ENCODE measurements at regions of chr15 and their contacts with region 1.

Region 1: GRCh38 chr15:74615508-74616365 is at the start of gene CLK3:
- DNase-seq: peak; percentile 96
- ATAC-seq: peak; percentile 80
- H3K4me3 ChIP-seq: peak within 1 kb of the TSS; percentile 50 to 100 (median 100)
- H3K4me3 Mint-ChIP-seq: peak within 1 kb of the TSS; percentile 92
- H3K27ac ChIP-seq: peak within 1 kb of the TSS; percentile 99
- H3K27ac Mint-ChIP-seq: peak within 1 kb of the TSS; percentile 97
- H3K4me1 ChIP-seq: peaks cover 18 to 39% of the 10 kb centered on the region in 2 donors
- H3K4me1 Mint-ChIP-seq: peaks cover 37% of the 10 kb centered on the region
- H3K27me3 ChIP-seq: no peaks in the 10 kb centered on the region
- H3K27me3 Mint-ChIP-seq: no peaks in the 10 kb centered on the region
- CTCF ChIP-seq: no peak
- total RNA-seq, gene CLK3: 164 and 176 TPM in 2 replicates

Region 2: GRCh38 chr15:74460871-74461846 is 154.6 kb before region 1 on chr15 and contains the start of gene UBL7:
- CTCF ChIA-PET with region 1: interaction called, 3 read pairs
- POLR2A ChIA-PET with region 1: interaction called, 3 read pairs
- intact Hi-C with region 1: loop called (anchors 1 kb)
- DNase-seq: peak; percentile 96
- ATAC-seq: peak; percentile 95
- H3K4me3 ChIP-seq: peak within 1 kb of the TSS; percentile 78 to 99 (median 90)
- H3K4me3 Mint-ChIP-seq: peak within 1 kb of the TSS; percentile 92
- H3K27ac ChIP-seq: peak within 1 kb of the TSS; percentile 77 to 80
- H3K27ac Mint-ChIP-seq: peak within 1 kb of the TSS; percentile 76
- H3K4me1 ChIP-seq: peaks cover 30 to 40% of the 10 kb centered on the region in 2 donors
- H3K4me1 Mint-ChIP-seq: peaks cover 39% of the 10 kb centered on the region
- H3K27me3 ChIP-seq: no peaks in the 10 kb centered on the region
- H3K27me3 Mint-ChIP-seq: no peaks in the 10 kb centered on the region
- CTCF ChIP-seq: no peak
- total RNA-seq, gene UBL7: 44.4 and 50.1 TPM in 2 replicates

Region 3: DNA sequence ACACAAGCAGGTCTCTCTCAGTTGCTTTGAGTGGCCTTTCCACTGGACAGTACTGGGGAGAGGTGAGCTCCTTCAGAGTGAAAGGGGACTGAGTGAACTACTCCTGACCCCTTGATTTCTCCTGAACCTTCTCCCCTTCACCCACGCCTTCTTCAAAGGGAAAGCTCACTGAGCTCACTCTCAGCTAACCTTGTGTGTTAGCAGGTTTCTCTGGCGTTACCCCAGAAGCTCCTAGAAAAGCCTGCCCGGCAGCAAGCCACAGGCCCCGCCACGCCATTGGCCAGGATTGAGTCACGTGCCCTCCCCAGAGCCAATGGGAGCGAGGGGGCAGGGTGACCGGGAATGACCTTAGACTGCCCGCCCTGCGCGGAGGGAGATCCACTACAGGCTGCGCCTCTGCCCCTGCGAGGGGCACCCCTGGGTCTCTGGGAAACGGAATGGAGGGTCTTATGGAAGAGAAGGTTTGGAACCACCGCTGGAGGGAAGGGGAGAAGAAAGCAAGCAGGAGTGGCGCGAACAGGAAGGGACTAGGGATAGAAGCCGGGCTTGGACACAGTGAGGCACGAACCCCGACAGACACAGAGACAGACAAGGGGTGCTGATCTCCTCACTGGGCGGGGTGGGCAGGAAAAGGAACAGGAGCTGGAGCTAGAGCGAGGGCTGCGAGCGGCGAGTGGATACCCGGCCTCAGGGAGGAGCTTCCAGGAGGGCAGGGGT is 17.5 kb before region 1 on chr15:
- CTCF ChIA-PET with region 1: interaction called, 3 read pairs
- POLR2A ChIA-PET with region 1: interaction called, 4 read pairs
- intact Hi-C with region 1: loop called (anchors 1 kb)
- DNase-seq: peak; percentile 86
- ATAC-seq: peak; percentile 100
- H3K4me3 ChIP-seq: peak overlapping the region; percentile 71 to 93 (median 79)
- H3K4me3 Mint-ChIP-seq: peak overlapping the region; percentile 100
- H3K27ac ChIP-seq: peak overlapping the region; percentile 68 to 78
- H3K27ac Mint-ChIP-seq: peak overlapping the region; percentile 97
- H3K4me1 ChIP-seq: peaks cover 3 to 15% of the 10 kb centered on the region in 2 donors
- H3K4me1 Mint-ChIP-seq: peaks cover 14% of the 10 kb centered on the region
- H3K27me3 ChIP-seq: no peaks in the 10 kb centered on the region
- H3K27me3 Mint-ChIP-seq: no peaks in the 10 kb centered on the region
- CTCF ChIP-seq: no peak

Region 4: DNA sequence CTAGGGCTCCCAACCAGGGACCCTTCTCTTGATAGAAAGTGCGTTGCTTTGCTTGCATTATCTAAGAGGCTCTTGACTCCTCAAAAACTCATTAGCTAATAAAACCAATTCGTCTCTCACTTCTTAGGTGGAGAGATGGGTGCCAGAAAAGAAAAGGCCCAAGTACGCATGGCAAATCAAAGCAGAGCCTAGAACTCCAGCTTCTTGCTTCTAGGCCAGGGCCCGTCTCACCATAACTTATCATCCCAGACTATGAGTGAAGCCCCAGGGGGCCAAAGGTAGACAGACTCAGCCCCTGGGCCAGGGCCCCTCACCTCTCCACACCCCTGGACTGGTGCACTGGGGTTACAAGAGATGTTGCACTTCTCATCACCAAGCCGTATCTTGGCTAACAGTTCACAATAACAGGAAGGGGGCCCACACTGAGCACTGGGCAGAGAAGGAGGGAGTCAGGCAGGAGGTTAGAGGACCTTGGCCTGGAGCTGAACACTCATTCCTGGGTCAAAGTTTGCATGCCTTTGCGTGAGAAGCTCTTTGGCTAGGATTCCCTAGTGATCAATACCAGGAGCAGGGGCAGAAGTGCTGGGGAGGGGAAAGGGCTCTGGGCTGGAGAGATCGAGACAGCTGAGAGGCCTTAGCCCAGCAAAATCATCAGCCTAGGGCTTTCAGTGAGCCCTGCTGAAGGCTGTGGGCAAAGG is 115.0 kb after region 1 on chr15:
- CTCF ChIA-PET with region 1: no interaction called
- POLR2A ChIA-PET with region 1: no interaction called
- intact Hi-C with region 1: no loop called
- DNase-seq: no peak
- ATAC-seq: no peak
- H3K4me3 ChIP-seq: no peak overlapping the region
- H3K4me3 Mint-ChIP-seq: no peak overlapping the region
- H3K27ac ChIP-seq: no peak overlapping the region
- H3K27ac Mint-ChIP-seq: no peak overlapping the region
- H3K4me1 ChIP-seq: peaks cover 11 to 14% of the 10 kb centered on the region in 2 donors
- H3K4me1 Mint-ChIP-seq: peaks cover 10% of the 10 kb centered on the region
- H3K27me3 ChIP-seq: peaks cover 0 to 50% (median 24%) of the 10 kb centered on the region in 4 experiments
- H3K27me3 Mint-ChIP-seq: peaks cover 62% of the 10 kb centered on the region
- CTCF ChIP-seq: no peak

Region 5: DNA sequence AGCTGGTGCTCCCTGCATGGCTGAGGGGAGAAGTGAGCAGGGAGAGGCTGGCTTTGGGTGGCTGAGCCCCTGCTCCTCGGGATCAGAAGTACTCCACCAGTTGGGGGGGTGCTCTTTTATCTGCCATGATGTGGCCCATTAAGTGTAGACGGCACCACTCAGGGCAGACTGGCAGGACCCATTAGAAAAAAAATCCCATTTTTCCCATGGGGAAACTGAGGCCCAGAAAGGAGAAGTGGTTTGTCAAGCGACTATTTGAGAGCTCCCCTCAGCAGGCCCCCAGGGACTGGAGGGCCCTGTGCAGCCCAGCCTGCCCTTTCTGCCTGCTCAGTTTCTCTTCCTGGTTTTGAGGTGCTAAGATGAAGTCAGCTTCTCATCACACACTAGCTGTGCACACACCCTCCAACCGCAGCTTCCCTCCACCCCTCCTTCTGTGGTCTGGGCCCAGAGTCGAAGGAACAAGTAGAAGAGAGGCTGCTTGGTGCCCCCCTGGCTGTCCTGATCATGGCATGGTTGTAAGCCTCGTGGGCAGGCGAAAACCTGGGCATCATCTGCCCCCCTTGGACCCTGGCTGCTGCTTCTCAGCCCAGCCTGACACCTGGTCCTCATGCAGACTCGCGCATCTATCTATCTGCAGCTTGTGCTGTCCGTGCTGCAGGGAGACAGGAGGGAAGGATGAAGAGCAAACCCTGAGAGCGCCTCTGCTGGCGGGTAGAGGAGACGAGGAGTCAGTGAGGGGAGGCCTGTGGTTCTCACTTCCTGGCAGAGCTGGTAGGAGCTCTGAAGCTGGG is 171.7 kb after region 1 on chr15:
- CTCF ChIA-PET with region 1: no interaction called
- POLR2A ChIA-PET with region 1: interaction called, 4 read pairs
- intact Hi-C with region 1: loop called (anchors 2 kb)
- DNase-seq: peak; percentile 98
- ATAC-seq: peak; percentile 57
- H3K4me3 ChIP-seq: peak overlapping the region; percentile 67 to 99 (median 86)
- H3K4me3 Mint-ChIP-seq: peak overlapping the region; percentile 93
- H3K27ac ChIP-seq: peak overlapping the region; percentile 90 to 93
- H3K27ac Mint-ChIP-seq: peak overlapping the region; percentile 99
- H3K4me1 ChIP-seq: peaks cover 61 to 91% of the 10 kb centered on the region in 2 donors
- H3K4me1 Mint-ChIP-seq: peaks cover 94% of the 10 kb centered on the region
- H3K27me3 ChIP-seq: no peaks in the 10 kb centered on the region
- H3K27me3 Mint-ChIP-seq: no peaks in the 10 kb centered on the region
- CTCF ChIP-seq: peak; percentile 75

Region 6: DNA sequence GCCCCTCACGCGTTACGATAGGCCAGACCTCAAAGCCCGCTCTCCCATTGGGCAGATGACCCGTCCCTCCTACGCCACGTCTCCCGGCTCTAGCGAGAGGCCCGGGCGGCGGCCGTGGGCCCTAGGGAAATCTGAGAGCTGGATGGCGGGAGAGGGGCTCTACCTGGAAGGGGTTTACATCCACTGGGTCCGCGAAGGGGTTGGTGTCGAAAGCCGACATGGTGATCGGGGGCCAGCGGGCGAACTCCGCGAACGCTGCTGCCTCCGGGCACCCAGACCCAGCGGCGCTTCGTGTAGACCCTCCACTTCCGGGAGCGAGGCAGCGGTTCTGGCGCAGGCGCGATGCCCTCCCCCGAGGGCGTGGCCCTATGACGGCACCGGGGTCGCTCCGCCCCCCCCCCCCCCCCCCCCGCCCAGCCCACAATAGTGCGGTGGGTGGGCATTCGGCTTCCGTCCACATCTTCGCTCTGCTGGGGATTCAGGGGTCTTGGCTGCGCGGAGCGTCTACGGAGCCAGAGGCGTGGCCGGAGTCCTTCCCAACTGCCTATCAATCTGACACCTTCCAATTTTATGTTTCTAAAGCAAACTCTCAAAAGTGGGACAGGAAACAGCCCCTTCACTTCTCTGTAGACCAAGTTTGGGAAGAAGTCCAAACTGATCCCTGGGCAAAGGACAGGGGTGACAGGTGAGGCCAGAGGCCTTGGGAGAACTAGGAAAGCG is 257.5 kb after region 1 on chr15 and contains the start of gene SCAMP2:
- CTCF ChIA-PET with region 1: no interaction called
- POLR2A ChIA-PET with region 1: no interaction called
- intact Hi-C with region 1: loop called (anchors 1 kb)
- DNase-seq: peak; percentile 96
- ATAC-seq: peak; percentile 96
- H3K4me3 ChIP-seq: peak within 1 kb of the TSS; percentile 64 to 91 (median 83)
- H3K4me3 Mint-ChIP-seq: peak within 1 kb of the TSS; percentile 95
- H3K27ac ChIP-seq: peak within 1 kb of the TSS; percentile 94 to 95
- H3K27ac Mint-ChIP-seq: peak within 1 kb of the TSS; percentile 98
- H3K4me1 ChIP-seq: peaks cover 37 to 52% of the 10 kb centered on the region in 2 donors
- H3K4me1 Mint-ChIP-seq: peaks cover 42% of the 10 kb centered on the region
- H3K27me3 ChIP-seq: no peaks in the 10 kb centered on the region
- H3K27me3 Mint-ChIP-seq: no peaks in the 10 kb centered on the region
- CTCF ChIP-seq: no peak
- total RNA-seq, gene SCAMP2: 105 and 111 TPM in 2 replicates

Region 7: DNA sequence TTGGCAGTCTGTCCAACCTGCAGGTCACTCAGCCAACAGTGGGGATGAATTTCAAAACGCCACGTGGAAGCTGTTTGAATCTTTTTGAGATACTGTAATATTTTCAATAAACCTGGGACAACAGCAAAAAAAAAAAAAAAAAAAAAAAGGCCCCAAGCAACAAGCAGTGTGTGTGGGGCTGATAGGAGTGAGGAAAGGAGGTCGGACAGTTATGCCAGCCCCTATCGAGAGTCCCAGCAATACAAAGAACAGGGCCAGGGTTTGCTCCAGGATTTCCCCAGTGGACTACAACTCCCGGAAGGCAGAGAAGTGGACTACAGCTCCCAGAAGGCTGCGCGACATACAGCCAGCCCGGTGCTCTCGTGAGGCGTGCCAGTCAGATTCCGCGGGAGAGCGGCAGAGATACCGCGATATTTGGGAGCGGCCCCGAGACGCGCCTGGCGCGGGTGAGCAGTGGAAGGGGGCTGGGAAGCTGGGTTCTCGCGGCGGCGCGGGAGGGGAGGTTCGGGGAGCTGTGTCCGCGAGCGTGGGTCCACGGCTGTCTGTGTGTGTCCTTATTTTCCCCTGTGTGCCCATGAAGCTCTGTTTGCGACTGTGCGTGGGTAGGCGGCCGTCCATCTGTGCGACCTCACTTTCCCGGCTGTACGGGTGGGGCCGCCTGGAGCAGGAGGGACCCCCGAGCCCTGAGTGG is 407.6 kb after region 1 on chr15 and contains the start of gene PPCDC:
- CTCF ChIA-PET with region 1: no interaction called
- POLR2A ChIA-PET with region 1: no interaction called
- intact Hi-C with region 1: loop called (anchors 5 kb)
- DNase-seq: peak; percentile 93
- ATAC-seq: peak; percentile 100
- H3K4me3 ChIP-seq: peak within 1 kb of the TSS; percentile 72 to 96 (median 94)
- H3K4me3 Mint-ChIP-seq: peak within 1 kb of the TSS; percentile 97
- H3K27ac ChIP-seq: peak within 1 kb of the TSS; percentile 49 to 72
- H3K27ac Mint-ChIP-seq: peak within 1 kb of the TSS; percentile 94
- H3K4me1 ChIP-seq: peaks cover 5 to 18% of the 10 kb centered on the region in 2 donors
- H3K4me1 Mint-ChIP-seq: peaks cover 14% of the 10 kb centered on the region
- H3K27me3 ChIP-seq: peaks cover 0 to 33% (median 15%) of the 10 kb centered on the region in 4 experiments
- H3K27me3 Mint-ChIP-seq: peaks cover 23% of the 10 kb centered on the region
- CTCF ChIP-seq: no peak
- total RNA-seq, gene PPCDC: 14.8 and 15.1 TPM in 2 replicates

Measured in B cell (primary cell).